ENCODE measurements at regions of chr6 and their contacts with region 1.

Region 1: DNA sequence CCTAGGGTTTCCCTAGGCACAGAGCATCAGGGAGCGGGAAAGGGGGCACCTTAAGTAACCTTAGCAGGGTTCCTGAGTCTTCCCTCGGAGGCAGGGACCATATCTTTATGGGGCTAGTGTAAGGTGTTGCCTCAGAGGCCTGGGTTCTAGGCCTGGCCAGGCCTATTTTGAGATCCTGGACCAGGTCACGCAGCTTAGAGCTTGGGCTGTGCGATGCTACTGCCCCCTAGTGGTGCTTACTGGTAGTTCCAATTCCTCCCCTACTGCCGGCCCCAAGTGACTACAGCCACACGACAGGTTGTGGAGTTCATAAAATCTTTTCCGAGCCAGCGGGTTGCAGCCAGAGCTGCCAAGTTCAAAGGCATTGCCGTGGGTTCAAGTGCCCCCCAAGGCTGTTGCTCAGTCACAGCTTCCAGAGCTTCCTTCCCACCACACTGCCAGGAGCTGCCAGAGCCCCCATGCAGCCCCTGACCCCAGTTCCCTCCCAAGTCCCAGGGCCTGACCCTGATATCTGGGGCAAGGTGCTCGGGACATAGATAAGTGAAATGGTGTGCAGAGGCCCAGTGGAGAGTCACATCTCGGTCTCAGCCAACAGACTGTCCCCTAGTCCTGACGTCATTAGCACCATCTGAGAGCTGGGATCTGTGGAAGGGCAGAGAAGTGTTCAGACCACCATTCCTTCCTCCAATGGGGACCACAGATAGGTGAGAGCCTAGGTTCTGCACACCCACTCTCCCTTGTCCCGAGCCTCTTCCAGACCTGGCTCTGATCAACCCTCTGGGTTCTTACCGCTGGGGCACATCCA is 3.3 kb downstream of the LRRC73 start:
- DNase-seq: peak; percentile 57 to 96 (median 85)

Region 2: DNA sequence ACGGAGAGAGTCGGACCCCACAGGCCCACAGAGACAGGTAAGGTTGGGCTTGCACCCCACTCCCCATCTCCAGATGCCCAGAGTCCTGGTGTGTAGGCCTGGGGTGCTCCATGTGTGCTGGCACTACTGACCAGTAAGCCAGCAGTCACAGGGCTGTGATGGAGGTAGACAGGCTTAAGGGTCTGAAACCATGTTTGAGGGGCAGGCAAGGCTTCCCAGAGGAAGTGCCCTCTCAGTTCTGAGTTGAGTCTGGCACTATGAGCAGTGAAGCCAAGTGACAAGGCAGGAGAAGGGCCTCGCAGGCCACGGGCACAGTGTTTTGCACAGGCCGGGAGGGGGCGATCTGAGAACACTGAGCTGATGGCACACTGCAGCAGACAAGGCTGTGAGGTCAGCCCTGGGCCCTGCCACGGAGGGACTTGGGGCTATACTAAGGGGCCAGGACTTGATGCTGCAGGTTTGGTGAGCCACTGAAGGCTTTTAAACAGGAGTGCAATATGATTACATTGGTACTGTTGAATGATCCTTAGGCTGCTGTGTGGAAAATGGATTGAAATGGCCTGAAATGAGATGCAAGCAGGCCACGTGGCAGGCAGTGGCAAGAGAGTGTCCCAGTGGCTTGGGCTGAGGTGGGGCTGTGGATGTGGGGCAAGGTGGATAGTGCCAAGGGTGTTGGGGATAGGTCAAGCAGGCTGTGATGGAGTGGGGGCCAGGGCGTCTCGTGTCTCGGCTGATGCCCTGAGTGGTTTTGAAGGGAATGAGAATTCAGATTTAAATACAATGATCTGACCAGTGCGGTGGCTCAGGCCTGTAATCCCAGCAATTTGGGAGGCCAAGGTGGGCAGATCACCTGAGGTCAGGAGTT is 243.3 kb before region 1 on chr6:
- intact Hi-C with region 1: loop called (anchors 10 kb)
- DNase-seq: peak in 9 of 10 donors; percentile 42 to 94 (median 61)

Region 3: GRCh38 chr6:43454696-43455530 is 52.0 kb before region 1 on chr6:
- intact Hi-C with region 1: loop called (anchors 2 kb)
- DNase-seq: peak in 8 of 10 donors; percentile 83 to 98 (median 87)

Region 4: DNA sequence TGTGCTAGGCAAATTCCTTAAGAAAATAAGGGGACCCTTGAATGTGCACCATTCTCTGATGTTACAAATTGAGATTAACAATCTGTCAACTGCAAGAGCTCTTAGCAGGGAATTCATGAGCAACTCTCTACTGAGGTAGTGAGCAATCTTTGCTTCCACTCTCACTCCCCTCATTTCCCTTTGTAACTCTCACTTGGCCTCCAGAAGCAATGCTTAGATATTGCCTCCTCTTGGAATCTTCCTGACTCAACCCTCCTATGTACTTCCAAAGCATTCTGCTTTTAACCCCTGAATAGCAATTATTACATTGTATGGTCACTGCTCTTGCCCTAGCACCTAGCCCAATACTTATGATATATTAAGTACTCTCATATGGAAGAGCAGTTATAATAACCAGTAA is 52.5 kb after region 1 on chr6:
- intact Hi-C with region 1: no loop called
- DNase-seq: no peak

Region 5: DNA sequence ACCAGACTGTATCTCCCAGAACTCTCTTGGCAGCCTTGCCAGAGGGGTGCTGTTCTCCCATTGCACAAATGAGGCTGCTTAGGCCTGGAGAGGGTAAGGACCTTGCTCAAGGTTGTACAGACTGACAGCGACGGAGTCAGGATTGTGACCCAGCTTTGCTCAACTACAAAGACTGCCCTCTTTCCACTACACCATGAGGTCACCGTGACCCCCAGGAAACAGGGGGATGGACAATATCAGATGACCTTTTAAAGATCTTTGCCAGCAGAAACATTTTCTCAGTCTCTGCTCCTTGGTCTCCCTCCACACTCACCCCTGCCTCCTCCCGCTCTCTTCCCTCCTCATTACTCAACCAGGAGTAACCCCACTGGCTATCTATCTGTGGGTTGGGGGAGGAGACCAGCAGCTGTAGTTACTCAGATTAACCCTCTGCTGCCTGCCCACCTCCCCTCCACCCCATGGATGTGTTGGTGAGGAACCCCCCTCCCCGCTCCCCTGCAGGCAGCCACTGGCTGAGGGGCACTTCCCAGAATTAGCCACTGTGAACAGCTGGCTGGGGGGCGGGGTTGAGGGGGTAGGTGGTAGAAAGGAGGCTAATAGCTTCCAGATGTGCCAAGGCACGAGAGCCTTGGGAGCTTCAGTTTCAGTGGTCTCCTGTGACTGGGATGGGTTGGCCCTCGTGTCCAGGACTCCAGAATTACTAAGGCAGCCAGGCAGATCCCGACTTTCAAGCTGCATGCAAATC is 207.6 kb after region 1 on chr6:
- intact Hi-C with region 1: no loop called
- DNase-seq: peak in 1 of 10 donors; percentile 41

Measured in posterior cingulate gyrus (tissue), 11 donors.